B cell (primary cell): ENCODE measurements at regions of chr1 and their contacts with region 1.

Region 1: GRCh38 chr1:220873868-220874655 is 5.2 kb upstream of the HLX start:
- DNase-seq: peak; percentile 74
- ATAC-seq: peak; percentile 22
- H3K4me3 ChIP-seq: no peak overlapping the region
- H3K4me3 Mint-ChIP-seq: no peak overlapping the region
- H3K27ac ChIP-seq: no peak overlapping the region
- H3K27ac Mint-ChIP-seq: no peak overlapping the region
- H3K4me1 ChIP-seq: peaks cover 26 to 36% of the 10 kb centered on the region in 2 donors
- H3K4me1 Mint-ChIP-seq: peaks cover 36% of the 10 kb centered on the region
- H3K27me3 ChIP-seq: peaks cover 0 to 30% (median 11%) of the 10 kb centered on the region in 4 experiments
- H3K27me3 Mint-ChIP-seq: peaks cover 11% of the 10 kb centered on the region
- CTCF ChIP-seq: peak; percentile 80

Region 2: GRCh38 chr1:220908757-220909156 is 34.7 kb after region 1 on chr1:
- CTCF ChIA-PET with region 1: interaction called, 21 read pairs
- POLR2A ChIA-PET with region 1: interaction called, 4 read pairs
- intact Hi-C with region 1: loop called (anchors 1 kb)
- DNase-seq: peak; percentile 49
- ATAC-seq: peak; percentile 36
- H3K4me3 ChIP-seq: no peak overlapping the region
- H3K4me3 Mint-ChIP-seq: no peak overlapping the region
- H3K27ac ChIP-seq: no peak overlapping the region
- H3K27ac Mint-ChIP-seq: no peak overlapping the region
- H3K4me1 ChIP-seq: peaks cover 7 to 10% of the 10 kb centered on the region in 2 donors
- H3K4me1 Mint-ChIP-seq: peaks cover 9% of the 10 kb centered on the region
- H3K27me3 ChIP-seq: peaks cover 0 to 7% (median 0%) of the 10 kb centered on the region in 4 experiments
- H3K27me3 Mint-ChIP-seq: peaks cover 14% of the 10 kb centered on the region
- CTCF ChIP-seq: peak; percentile 62

Region 3: DNA sequence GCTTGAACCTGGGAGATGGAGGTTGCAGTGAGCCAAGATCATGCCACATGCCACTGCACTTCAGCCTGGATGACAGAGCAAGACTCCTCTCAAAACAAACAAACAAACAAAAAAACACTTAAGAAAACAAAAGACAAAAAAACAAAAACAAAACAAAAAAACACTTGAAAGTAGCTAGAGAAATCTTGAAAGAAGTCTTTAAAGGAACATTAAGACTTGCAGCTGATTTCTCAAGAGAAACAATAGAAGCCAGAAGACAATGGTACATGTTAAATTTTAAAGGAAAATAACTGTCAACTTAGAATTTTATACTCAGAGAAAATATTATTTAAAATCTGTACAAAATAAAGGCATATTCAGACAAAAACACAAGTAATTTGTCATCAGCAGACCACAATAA is 76.5 kb after region 1 on chr1:
- CTCF ChIA-PET with region 1: no interaction called
- POLR2A ChIA-PET with region 1: no interaction called
- intact Hi-C with region 1: no loop called
- DNase-seq: no peak
- ATAC-seq: no peak
- H3K4me3 ChIP-seq: no peak overlapping the region
- H3K4me3 Mint-ChIP-seq: no peak overlapping the region
- H3K27ac ChIP-seq: no peak overlapping the region
- H3K27ac Mint-ChIP-seq: no peak overlapping the region
- H3K4me1 ChIP-seq: no peaks in the 10 kb centered on the region
- H3K4me1 Mint-ChIP-seq: no peaks in the 10 kb centered on the region
- H3K27me3 ChIP-seq: no peaks in the 10 kb centered on the region
- H3K27me3 Mint-ChIP-seq: peaks cover 6% of the 10 kb centered on the region
- CTCF ChIP-seq: no peak

Region 4: DNA sequence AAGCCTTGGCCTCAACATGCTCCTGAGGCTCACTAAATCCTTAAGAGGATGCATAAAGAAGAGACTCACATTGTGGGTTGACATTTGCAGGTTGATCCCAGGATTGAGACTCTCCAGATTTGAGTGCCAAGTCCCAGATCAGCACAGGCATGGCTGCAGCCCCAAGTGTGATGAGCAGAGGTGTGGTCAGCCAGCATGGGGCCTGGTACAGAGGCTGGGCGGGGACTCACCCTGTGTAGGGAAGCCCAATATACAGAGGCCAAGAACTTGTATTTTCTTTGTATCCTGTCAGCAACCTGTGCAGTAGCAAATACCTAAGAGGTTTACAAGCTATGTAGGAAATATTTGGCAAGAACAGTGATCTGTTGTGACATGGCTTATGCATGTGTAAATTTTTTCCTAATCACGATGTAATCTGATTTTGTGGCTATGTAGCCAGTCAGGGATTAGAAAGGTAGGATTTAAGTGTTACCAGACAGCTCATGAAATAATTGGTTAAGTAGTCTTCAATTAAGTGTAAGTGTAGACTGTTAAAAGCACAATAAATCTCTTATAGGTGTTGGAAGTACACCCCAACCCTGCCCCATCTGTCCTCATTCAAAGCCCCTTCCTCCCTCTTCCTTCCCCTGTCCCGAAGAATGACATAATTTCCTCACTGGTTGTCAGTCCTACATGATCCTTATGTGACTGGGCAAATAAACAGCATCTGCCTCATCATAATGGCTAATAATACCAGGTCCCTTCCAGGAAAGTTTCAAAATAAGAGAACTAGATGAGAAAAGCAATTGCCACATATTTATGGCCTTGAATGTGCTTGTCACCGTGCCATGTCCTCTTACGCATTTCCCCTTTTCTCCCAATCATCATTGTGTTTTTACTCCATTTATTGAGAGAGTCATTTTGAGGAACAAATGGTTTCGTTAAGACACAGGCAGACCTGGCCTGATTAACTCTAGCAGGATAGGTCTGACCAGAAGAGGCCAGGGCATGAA is 126.1 kb after region 1 on chr1:
- CTCF ChIA-PET with region 1: no interaction called
- POLR2A ChIA-PET with region 1: no interaction called
- intact Hi-C with region 1: no loop called
- DNase-seq: no peak
- ATAC-seq: no peak
- H3K4me3 ChIP-seq: no peak overlapping the region
- H3K4me3 Mint-ChIP-seq: no peak overlapping the region
- H3K27ac ChIP-seq: no peak overlapping the region
- H3K27ac Mint-ChIP-seq: no peak overlapping the region
- H3K4me1 ChIP-seq: peaks cover 0 to 3% of the 10 kb centered on the region in 2 donors
- H3K4me1 Mint-ChIP-seq: no peaks in the 10 kb centered on the region
- H3K27me3 ChIP-seq: no peaks in the 10 kb centered on the region
- H3K27me3 Mint-ChIP-seq: no peaks in the 10 kb centered on the region
- CTCF ChIP-seq: no peak

Region 5: DNA sequence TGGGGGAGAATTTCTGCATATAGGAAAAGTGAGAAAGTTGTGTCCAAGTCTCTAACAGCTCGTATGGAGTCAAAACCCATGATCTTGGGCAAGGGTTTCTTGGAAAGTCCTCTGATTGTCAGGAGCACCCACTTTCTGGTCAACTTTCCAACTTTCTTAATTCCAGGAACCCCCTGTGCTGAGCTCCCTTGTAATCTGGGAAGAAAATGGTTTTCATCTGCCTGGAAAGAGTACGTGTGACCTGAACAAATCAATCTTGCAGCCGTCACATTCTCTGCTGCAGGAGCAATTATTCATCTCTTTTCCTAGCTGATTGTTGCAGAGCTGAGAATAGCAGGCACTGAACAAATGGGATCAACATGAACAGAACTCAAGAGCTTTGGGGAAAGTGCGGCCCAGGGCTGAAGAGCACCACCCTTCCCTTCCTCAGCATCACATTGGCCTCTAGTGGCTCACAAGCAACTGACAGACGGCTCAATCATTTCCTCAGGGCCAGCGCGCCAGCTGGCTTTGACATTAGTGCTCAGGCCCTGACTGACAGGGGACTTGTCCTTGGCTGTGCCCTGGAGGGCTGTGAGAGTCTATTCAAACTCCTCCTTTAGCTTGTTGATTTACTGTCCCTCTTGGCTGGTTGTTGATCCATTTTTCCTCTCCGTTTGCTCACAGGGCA is 300.4 kb after region 1 on chr1:
- CTCF ChIA-PET with region 1: interaction called, 12 read pairs
- POLR2A ChIA-PET with region 1: no interaction called
- intact Hi-C with region 1: loop called (anchors 1 kb)
- DNase-seq: peak; percentile 19
- ATAC-seq: no peak
- H3K4me3 ChIP-seq: no peak overlapping the region
- H3K4me3 Mint-ChIP-seq: no peak overlapping the region
- H3K27ac ChIP-seq: no peak overlapping the region
- H3K27ac Mint-ChIP-seq: peak overlapping the region; percentile 59
- H3K4me1 ChIP-seq: peaks cover 0 to 2% of the 10 kb centered on the region in 2 donors
- H3K4me1 Mint-ChIP-seq: peaks cover 3% of the 10 kb centered on the region
- H3K27me3 ChIP-seq: peaks cover 0 to 20% (median 8%) of the 10 kb centered on the region in 4 experiments
- H3K27me3 Mint-ChIP-seq: peaks cover 20% of the 10 kb centered on the region
- CTCF ChIP-seq: no peak

Region 6: GRCh38 chr1:221263831-221264767 is 390.0 kb after region 1 on chr1:
- CTCF ChIA-PET with region 1: interaction called, 9 read pairs
- POLR2A ChIA-PET with region 1: no interaction called
- intact Hi-C with region 1: loop called (anchors 1 kb)
- DNase-seq: peak; percentile 63
- ATAC-seq: peak; percentile 58
- H3K4me3 ChIP-seq: no peak overlapping the region
- H3K4me3 Mint-ChIP-seq: no peak overlapping the region
- H3K27ac ChIP-seq: no peak overlapping the region
- H3K27ac Mint-ChIP-seq: no peak overlapping the region
- H3K4me1 ChIP-seq: no peaks in the 10 kb centered on the region
- H3K4me1 Mint-ChIP-seq: no peaks in the 10 kb centered on the region
- H3K27me3 ChIP-seq: peaks cover 0 to 3% (median 0%) of the 10 kb centered on the region in 4 experiments
- H3K27me3 Mint-ChIP-seq: peaks cover 28% of the 10 kb centered on the region
- CTCF ChIP-seq: peak; percentile 67